Breast epithelium (tissue), 4 donors: ENCODE measurements at regions of chr2 and their contacts with region 1.

Region 1: GRCh38 chr2:20186078-20186854 is 38.7 kb downstream of the SDC1 start:
- DNase-seq: no peak
- H3K4me3 ChIP-seq: no peak overlapping the region
- H3K27ac ChIP-seq: no peak overlapping the region
- H3K4me1 ChIP-seq: peaks cover 0 to 4% of the 10 kb centered on the region in 2 donors
- H3K27me3 ChIP-seq: no peaks in the 10 kb centered on the region
- CTCF ChIP-seq: no peak
- POLR2A ChIP-seq: no peak

Region 2: DNA sequence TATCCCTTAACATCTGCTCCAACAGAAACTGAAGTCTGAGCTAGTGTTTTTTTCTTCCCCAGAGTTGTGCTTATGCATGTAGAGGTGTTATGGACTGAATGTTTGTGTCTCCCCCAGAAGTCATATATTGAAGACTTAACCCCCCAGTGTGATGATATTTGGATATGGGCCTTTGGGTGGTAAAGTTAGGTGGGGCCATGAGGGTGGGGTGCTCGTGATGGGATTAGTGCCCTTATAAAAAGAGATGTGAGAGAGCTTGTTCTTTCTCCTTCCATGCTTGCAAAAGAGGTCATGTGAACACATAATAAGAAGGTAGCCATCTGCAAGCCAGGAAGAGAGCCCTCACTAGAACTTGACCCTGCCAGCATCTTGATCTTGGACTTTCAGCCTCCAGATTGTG is 892.0 kb after region 1 on chr2:
- intact Hi-C with region 1: loop called (anchors 5 kb)
- DNase-seq: no peak
- H3K4me3 ChIP-seq: no peak overlapping the region
- H3K27ac ChIP-seq: no peak overlapping the region
- H3K4me1 ChIP-seq: no peaks in the 10 kb centered on the region
- H3K27me3 ChIP-seq: no peaks in the 10 kb centered on the region
- CTCF ChIP-seq: no peak
- POLR2A ChIP-seq: no peak